Prostate gland (tissue), 2 donors: ENCODE measurements at regions of chr15 and their contacts with region 1.

Region 1: DNA sequence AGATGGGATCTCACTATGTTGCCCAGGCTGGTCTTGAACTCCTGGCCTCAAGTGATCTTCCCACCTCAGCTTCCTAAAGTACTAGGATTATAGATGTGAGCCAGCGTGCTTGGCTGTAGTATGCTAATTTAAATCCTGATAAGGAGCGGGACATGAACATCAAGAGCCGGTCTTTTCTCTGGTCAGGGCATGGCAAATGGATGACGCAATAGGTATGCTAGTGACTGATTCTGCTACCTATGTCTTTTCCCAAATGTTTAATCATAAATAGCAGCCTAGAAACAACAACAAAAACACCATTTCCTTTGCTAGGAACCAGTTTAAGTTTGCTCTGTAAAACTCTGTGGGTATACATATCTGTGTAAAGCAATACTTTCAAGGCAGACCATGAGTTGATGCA is 64.7 kb downstream of the STARD9 start:
- DNase-seq: no peak
- H3K4me3 ChIP-seq: no peak overlapping the region
- H3K27ac ChIP-seq: no peak overlapping the region
- H3K4me1 ChIP-seq: no peaks in the 10 kb centered on the region
- H3K27me3 ChIP-seq: no peaks in the 10 kb centered on the region
- CTCF ChIP-seq: no peak
- POLR2A ChIP-seq: no peak

Region 2: DNA sequence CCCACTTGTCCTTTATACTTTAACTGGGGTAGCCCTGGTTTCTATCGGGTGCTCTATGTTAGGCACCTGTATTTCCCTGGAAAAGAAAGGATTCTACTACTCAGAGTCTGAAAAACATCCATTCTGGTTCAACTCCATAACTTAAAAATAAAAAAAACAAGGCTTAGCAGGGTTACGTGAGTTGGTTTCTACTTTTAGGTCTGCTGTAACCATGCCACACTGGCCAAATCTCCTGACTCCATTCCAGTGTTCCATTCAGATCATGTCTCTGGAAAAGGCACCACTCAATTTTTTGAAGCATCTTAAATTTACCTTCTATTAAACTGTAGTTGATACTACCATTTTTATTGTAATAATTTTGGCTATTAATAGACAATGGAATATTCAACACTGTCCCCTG is 218.7 kb before region 1 on chr15:
- intact Hi-C with region 1: no loop called
- DNase-seq: no peak
- H3K4me3 ChIP-seq: no peak overlapping the region
- H3K27ac ChIP-seq: no peak overlapping the region
- H3K4me1 ChIP-seq: no peaks in the 10 kb centered on the region
- H3K27me3 ChIP-seq: no peaks in the 10 kb centered on the region
- CTCF ChIP-seq: no peak
- POLR2A ChIP-seq: no peak

Region 3: DNA sequence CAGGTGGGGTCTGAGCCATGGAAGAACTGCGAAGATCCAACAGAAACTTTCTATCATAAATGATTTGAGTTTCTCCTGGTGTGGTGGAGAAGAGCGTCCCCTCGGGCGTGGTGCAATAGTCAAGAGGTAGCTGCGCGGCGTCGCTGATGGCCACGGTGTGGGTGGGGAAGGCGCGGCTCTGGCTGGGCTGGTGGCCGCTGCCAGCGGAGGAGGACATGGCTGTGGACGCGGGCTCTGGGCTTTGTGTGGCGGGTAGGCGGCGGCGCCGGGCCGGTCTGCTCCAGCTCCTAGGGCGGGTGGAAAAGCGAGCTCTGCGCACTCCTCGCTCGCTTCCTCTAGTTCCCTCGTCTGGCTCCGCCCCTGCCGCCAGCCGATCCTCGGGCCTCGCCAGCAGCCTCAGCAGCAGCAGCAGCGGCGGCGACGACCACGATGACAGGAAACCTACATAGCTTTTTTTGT is 58.8 kb before region 1 on chr15:
- intact Hi-C with region 1: loop called (anchors 10 kb)
- DNase-seq: peak; percentile 83
- H3K4me3 ChIP-seq: peak overlapping the region; percentile 28 to 30
- H3K27ac ChIP-seq: peak overlapping the region; percentile 58 to 61
- H3K4me1 ChIP-seq: peaks cover 5% of the 10 kb centered on the region
- H3K27me3 ChIP-seq: no peaks in the 10 kb centered on the region
- CTCF ChIP-seq: peak in 1 of 4 experiments; percentile 8
- POLR2A ChIP-seq: peak; percentile 39